SK-N-SH (cell line): ENCODE measurements at regions of chr16 and their contacts with region 1.

Region 1: GRCh38 chr16:10964039-10964890 is 19.9 kb downstream of the CLEC16A start:
- DNase-seq: peak; percentile 79
- H3K4me3 ChIP-seq: peak overlapping the region in 1 of 2 experiments; percentile 30; a peak in 1 of 4 replicates
- H3K27ac ChIP-seq: peak overlapping the region in 1 of 2 experiments; percentile 29; a peak in 1 of 4 replicates
- H3K4me1 ChIP-seq: peaks cover 13 to 25% of the 10 kb centered on the region in 2 experiments
- H3K27me3 ChIP-seq: no peaks in the 10 kb centered on the region
- CTCF ChIP-seq: peak; percentile 92
- EP300 ChIP-seq: no peak
- RAD21 ChIP-seq: peak; percentile 94

Region 2: GRCh38 chr16:10862432-10862831 is 101.8 kb before region 1 on chr16:
- CTCF ChIA-PET with region 1: no interaction called
- POLR2A ChIA-PET with region 1: no interaction called
- DNase-seq: no peak
- H3K4me3 ChIP-seq: no peak overlapping the region
- H3K27ac ChIP-seq: no peak overlapping the region
- H3K4me1 ChIP-seq: peaks cover 0 to 9% of the 10 kb centered on the region in 2 experiments; a peak in 2 of 4 replicates
- H3K27me3 ChIP-seq: no peaks in the 10 kb centered on the region
- CTCF ChIP-seq: no peak
- EP300 ChIP-seq: peak in 1 of 2 experiments; percentile 69; a peak in 1 of 4 replicates
- RAD21 ChIP-seq: no peak

Region 3: GRCh38 chr16:10981697-10982216 is 17.5 kb after region 1 on chr16:
- CTCF ChIA-PET with region 1: interaction called, 52 read pairs
- POLR2A ChIA-PET with region 1: no interaction called
- DNase-seq: peak; percentile 53
- H3K4me3 ChIP-seq: no peak overlapping the region
- H3K27ac ChIP-seq: no peak overlapping the region
- H3K4me1 ChIP-seq: peaks cover 0 to 6% of the 10 kb centered on the region in 2 experiments; a peak in 2 of 4 replicates
- H3K27me3 ChIP-seq: no peaks in the 10 kb centered on the region
- CTCF ChIP-seq: peak; percentile 60
- EP300 ChIP-seq: no peak
- RAD21 ChIP-seq: peak; percentile 47

Region 4: GRCh38 chr16:11297492-11298142 is 333.4 kb after region 1 on chr16:
- CTCF ChIA-PET with region 1: interaction called, 12 read pairs
- POLR2A ChIA-PET with region 1: interaction called, 3 read pairs
- DNase-seq: peak; percentile 87
- H3K4me3 ChIP-seq: 0 out of 4 replicates have a peak overlapping the region, but pooled peaks of 1 of the 2 experiments have one; percentile 13
- H3K27ac ChIP-seq: peak overlapping the region in 1 of 2 experiments; percentile 86; a peak in 2 of 4 replicates
- H3K4me1 ChIP-seq: peaks cover 0 to 16% of the 10 kb centered on the region in 2 experiments; a peak in 2 of 4 replicates
- H3K27me3 ChIP-seq: no peaks in the 10 kb centered on the region
- CTCF ChIP-seq: no peak
- EP300 ChIP-seq: peak in 1 of 2 experiments; percentile 45; a peak in 1 of 4 replicates
- RAD21 ChIP-seq: peak; percentile 50

Region 5: DNA sequence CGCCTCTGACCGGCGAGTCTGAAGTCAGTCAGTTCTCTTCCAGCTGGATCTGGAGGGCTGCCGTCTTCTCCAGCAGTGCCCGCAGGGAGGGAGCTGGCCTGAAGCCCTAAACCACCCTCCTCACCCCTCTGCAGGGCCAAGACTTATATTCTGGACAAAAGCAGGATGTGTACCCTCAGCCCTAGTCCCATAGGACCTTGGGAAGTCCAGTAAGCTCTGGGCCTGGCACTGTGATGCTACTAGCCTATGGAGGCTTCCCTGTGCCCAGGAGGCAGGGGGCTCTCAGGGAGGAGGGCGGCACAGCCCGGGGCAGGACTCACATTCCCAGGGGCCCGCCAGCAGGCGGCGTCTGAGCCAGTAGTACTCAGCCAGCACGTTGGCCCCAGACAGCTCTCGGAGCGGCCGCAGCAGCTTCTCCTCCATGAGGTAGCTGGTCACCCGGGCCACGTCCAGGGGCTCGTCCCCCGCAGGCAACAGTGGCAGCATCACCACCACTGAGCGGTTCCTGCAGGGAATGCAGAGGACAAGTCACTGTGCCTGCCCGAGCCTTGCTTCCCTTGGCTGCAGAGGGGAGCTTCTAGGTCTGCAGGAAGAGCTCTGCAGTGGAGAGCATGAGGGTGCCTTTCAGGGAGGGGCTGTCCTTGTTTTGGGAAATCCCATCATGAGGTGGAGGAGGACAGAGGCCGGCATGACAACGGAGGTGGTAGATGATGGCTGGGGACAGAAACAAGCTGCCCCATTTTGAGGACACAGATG is 422.7 kb after region 1 on chr16:
- CTCF ChIA-PET with region 1: interaction called, 23 read pairs
- POLR2A ChIA-PET with region 1: no interaction called
- DNase-seq: no peak
- H3K4me3 ChIP-seq: no peak overlapping the region
- H3K27ac ChIP-seq: no peak overlapping the region
- H3K4me1 ChIP-seq: peaks cover 0 to 20% of the 10 kb centered on the region in 2 experiments; a peak in 1 of 4 replicates
- H3K27me3 ChIP-seq: no peaks in the 10 kb centered on the region
- CTCF ChIP-seq: peak; percentile 32; the same call in 1 of the 2 replicates
- EP300 ChIP-seq: no peak
- RAD21 ChIP-seq: no peak